ENCODE measurements at regions of chr9 and their contacts with region 1.

Region 1: DNA sequence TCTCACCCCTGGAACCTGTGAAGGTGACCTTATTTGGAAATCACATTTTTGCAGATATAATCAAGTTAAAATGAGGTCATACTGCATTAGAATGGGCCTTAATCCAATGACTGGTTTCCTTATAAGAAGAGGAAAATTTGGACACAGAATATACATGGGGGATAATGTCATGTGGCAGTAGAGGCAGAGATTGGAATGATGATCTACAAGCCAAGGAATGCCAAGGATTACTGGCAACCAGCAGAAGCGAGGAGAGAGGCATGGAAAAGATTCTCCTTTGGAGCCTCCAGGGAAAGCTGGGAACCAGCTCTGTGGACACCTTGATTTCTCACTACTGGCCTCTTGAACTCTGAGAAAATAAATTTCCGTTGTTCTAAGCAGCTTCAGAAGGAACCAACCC is 20.2 kb upstream of the CEP78 start:
- DNase-seq: no peak

Region 2: GRCh38 chr9:78196258-78196657 is 19.4 kb before region 1 on chr9:
- intact Hi-C with region 1: loop called in 1 of 2 experiments (anchors 1 kb)
- DNase-seq: no peak